CD8-positive, alpha-beta memory T cell (primary cell): ENCODE measurements at regions of chr22 and their contacts with region 1.

Region 1: GRCh38 chr22:32474635-32475467 is at the start of gene FBXO7:
- DNase-seq: peak; percentile 81 to 90 (median 86)
- H3K4me3 ChIP-seq: peak within 1 kb of the TSS; percentile 93
- H3K4me3 Mint-ChIP-seq: peak within 1 kb of the TSS; percentile 93 to 97 (median 96)
- H3K27ac ChIP-seq: peak within 1 kb of the TSS; percentile 90
- H3K27ac Mint-ChIP-seq: peak within 1 kb of the TSS; percentile 93 to 99 (median 97)
- H3K4me1 ChIP-seq: peaks cover 29% of the 10 kb centered on the region
- H3K4me1 Mint-ChIP-seq: peaks cover 11 to 30% (median 18%) of the 10 kb centered on the region in 3 donors
- H3K27me3 ChIP-seq: no peaks in the 10 kb centered on the region
- H3K27me3 Mint-ChIP-seq: no peaks in the 10 kb centered on the region
- total RNA-seq, gene FBXO7: 79.7 to 81.0 TPM

Region 2: GRCh38 chr22:32411829-32412592 is 62.8 kb before region 1 on chr22 and contains the start of gene RTCB:
- CTCF ChIA-PET with region 1: interaction called, 12 read pairs
- POLR2A ChIA-PET with region 1: interaction called, 17 read pairs
- DNase-seq: peak; percentile 84 to 94 (median 88)
- H3K4me3 ChIP-seq: peak within 1 kb of the TSS; percentile 86
- H3K4me3 Mint-ChIP-seq: peak within 1 kb of the TSS; percentile 95 to 100 (median 98)
- H3K27ac ChIP-seq: peak within 1 kb of the TSS; percentile 74
- H3K27ac Mint-ChIP-seq: peak within 1 kb of the TSS; percentile 83 to 98 (median 94)
- H3K4me1 ChIP-seq: peaks cover 22% of the 10 kb centered on the region
- H3K4me1 Mint-ChIP-seq: peaks cover 44 to 61% (median 52%) of the 10 kb centered on the region in 3 donors
- H3K27me3 ChIP-seq: no peaks in the 10 kb centered on the region
- H3K27me3 Mint-ChIP-seq: peaks cover 0 to 1% of the 10 kb centered on the region in 2 donors
- total RNA-seq, gene RTCB: 97.7 to 104 TPM

Region 3: DNA sequence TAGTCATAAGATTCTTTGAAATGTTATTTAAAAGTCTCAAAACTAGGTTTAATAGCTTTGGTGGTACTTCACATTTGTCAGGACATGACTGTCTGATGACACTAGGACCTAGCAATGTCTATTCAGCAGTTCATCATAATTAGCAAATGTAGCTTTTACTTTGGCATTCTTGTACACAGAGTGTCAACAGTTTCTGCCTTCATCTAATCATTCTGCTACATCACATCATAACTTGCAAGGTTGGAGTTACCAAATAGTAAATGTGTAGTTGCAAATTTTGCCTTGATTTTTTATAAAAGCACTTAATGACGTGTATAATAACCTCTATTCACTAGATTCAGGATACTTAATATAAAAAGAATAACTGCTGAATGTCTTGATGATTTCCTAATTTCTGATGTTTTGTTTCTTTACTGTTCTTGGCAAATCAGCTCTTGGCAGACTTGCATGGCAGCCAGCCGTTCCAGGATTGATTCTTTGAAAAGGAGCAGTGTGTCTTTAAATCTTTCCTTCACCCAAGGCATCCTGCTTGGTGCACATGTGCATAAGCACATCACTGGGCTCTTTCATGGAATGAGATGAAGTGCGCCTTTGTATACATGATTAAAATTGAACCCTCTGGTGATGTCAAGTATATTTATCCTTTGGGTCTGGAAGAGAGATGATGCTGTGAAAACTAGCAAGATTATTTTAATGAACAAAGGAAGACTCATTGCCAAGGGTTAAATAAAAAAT is 12.0 kb after region 1 on chr22:
- CTCF ChIA-PET with region 1: interaction called, 11 read pairs
- POLR2A ChIA-PET with region 1: interaction called, 3 read pairs
- DNase-seq: no peak
- H3K4me3 ChIP-seq: no peak overlapping the region
- H3K4me3 Mint-ChIP-seq: no peak overlapping the region
- H3K27ac ChIP-seq: no peak overlapping the region
- H3K27ac Mint-ChIP-seq: peak overlapping the region in 2 of 8 donors; percentile 24 to 51
- H3K4me1 ChIP-seq: peaks cover 7% of the 10 kb centered on the region
- H3K4me1 Mint-ChIP-seq: peaks cover 4 to 24% (median 20%) of the 10 kb centered on the region in 3 donors
- H3K27me3 ChIP-seq: no peaks in the 10 kb centered on the region
- H3K27me3 Mint-ChIP-seq: no peaks in the 10 kb centered on the region

Region 4: DNA sequence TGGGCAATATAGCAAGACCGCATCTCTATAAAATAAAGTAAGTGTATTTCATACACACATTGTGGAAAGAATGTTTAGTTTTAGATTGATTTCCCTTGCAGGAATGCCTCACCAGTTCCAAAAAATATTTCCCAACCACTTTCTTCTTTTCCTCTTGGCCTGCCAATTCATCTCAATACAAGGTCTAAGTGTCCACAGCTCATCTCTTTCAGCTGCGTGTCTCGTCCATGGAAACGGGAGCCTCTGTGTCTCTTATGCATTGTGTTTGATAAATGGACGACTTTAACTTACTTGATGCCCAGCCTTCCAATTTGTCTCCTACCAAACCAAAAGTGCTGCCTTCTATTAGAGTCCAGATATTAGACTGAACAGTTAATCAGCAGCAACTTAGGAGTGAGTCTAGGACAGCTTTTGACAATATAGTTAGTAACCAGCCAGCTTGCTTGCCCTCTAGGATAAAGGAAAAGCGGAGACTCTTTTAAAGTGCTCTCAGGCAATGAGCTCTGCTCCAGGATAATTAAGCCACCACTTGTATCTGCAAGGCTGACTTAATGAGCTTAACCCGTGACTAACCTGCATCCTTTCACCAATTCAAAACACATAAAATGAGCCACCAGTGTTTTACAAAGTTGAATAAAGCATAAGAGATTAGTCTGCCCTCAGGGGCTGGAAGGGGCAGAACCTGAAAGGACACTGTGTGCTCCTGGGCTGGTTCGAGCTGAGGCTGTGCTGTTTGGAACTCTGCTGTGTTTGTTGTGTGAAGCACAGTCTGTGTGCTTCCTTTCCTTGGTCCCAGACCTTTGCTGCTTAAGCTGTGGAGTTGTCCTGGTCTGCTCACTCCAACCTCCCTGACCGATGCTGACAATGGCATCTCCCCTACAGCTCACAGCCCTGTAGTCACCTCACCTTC is 27.2 kb after region 1 on chr22:
- CTCF ChIA-PET with region 1: no interaction called
- POLR2A ChIA-PET with region 1: no interaction called
- DNase-seq: no peak
- H3K4me3 ChIP-seq: no peak overlapping the region
- H3K4me3 Mint-ChIP-seq: no peak overlapping the region
- H3K27ac ChIP-seq: no peak overlapping the region
- H3K27ac Mint-ChIP-seq: peak overlapping the region in 1 of 8 donors; percentile 51
- H3K4me1 ChIP-seq: no peaks in the 10 kb centered on the region
- H3K4me1 Mint-ChIP-seq: no peaks in the 10 kb centered on the region
- H3K27me3 ChIP-seq: no peaks in the 10 kb centered on the region
- H3K27me3 Mint-ChIP-seq: no peaks in the 10 kb centered on the region